Heart left ventricle (tissue), 16 donors: ENCODE measurements at regions of chr5 and their contacts with region 1.

Region 1: GRCh38 chr5:150022163-150022540 is 21.6 kb downstream of the HMGXB3 start:
- DNase-seq: peak in 1 of 5 donors; percentile 36
- ATAC-seq: peak; percentile 48 to 79 (median 76)
- H3K4me3 ChIP-seq: peak overlapping the region in 3 of 12 donors; percentile 1 to 16 (median 13)
- H3K27ac ChIP-seq: peak overlapping the region; percentile 53 to 81 (median 68)
- H3K4me1 ChIP-seq: peaks cover 5 to 54% (median 40%) of the 10 kb centered on the region in 12 donors
- H3K27me3 ChIP-seq: no peaks in the 10 kb centered on the region
- CTCF ChIP-seq: no peak
- POLR2A ChIP-seq: no peak

Region 2: DNA sequence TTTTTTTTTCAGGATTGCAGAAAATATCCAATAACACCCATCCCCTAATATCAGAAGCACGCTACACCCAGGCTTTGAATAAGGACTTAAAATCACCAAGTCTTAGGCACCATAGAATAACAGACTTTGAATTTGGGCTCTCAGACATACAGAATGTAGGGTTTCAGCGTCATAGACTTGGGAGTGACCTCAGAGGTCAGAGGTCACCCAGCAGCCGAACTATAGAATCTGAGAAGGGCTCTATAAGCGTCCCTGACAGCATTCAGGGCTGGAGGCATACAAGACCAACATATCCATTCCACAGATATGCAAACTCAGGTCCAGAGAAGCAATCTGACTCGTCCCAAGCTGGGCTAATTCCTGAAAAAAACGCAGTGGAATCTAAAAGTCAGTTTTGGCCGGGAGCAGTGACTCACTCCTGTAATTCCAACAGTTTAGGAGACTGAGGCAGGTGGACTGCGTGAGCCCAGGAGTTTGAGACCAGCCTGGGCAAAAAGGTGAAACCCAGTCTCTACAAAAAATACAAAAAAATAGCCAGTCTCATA is 202.4 kb after region 1 on chr5:
- intact Hi-C with region 1: loop called in 9 of 10 experiments (anchors 5 to 10 kb)
- DNase-seq: no peak
- ATAC-seq: no peak
- H3K4me3 ChIP-seq: no peak overlapping the region
- H3K27ac ChIP-seq: no peak overlapping the region
- H3K4me1 ChIP-seq: no peaks in the 10 kb centered on the region
- H3K27me3 ChIP-seq: no peaks in the 10 kb centered on the region
- CTCF ChIP-seq: no peak
- POLR2A ChIP-seq: no peak